Activated CD4-positive, alpha-beta T cell treated with anti-CD3 and anti-CD28 coated beads, Interleukin-2, amount 10 ng/mL, durations not matched to agents 24 days and 14 days (primary cell): ENCODE measurements at regions of chr4 and their contacts with region 1.

Region 1: GRCh38 chr4:154743683-154744340 is at the start of gene LRAT:
- DNase-seq: peak; percentile 87
- H3K4me3 Mint-ChIP-seq: peak within 1 kb of the TSS; percentile 84
- H3K27ac Mint-ChIP-seq: no peak within 1 kb of the TSS
- H3K4me1 Mint-ChIP-seq: peaks cover 14% of the 10 kb centered on the region
- H3K27me3 Mint-ChIP-seq: peaks cover 71% of the 10 kb centered on the region
- total RNA-seq, gene LRAT: not detected in 2 replicates

Region 2: DNA sequence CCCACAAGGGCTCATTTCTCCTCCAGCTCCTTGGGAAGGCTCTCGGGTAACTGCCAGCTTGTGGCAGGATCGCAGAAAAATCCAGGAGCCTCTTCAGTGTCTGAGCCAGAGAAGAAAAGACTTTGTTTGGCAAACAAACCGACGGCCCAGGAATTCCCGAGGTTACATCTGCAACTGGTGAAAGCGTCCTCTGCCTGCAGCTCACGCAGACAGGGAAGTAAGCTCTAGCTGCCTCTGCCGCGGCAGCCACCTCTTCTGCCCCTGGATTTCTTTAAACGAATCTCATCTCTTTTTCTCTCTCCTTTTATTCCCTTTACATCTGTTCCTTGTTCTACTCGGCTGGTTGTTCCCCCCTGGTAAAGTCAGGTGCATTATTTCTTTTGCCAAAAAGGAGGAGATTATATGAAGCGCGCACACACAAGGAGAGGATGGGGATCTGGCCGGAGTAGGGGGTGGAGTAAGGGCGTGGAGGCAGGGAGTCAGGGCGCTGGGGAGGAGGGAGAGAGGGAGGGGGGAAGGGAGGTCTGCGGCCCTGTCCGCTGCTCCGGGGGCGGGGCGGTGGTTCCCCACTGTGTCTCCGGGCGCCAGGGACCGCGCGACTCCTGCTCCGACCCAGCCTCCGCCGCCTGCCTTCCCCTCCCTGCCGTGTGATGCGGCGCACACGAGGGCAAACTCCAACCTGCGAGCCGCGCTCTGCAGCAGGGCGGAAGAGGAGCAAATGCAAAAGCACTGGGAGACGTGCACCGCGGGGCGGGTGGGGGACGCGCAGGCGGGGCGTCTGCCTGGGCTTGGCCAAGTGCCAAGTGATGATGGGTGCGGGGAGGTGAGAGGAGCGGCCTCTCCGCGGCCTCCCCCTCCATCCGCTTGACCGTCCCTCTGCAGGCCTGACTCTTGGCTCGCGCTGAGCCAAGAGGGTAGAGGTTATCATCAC is 252.2 kb before region 1 on chr4 and contains the start of gene DCHS2:
- intact Hi-C with region 1: loop called (anchors 5 kb)
- DNase-seq: peak; percentile 68
- H3K4me3 Mint-ChIP-seq: peak within 1 kb of the TSS; percentile 66
- H3K27ac Mint-ChIP-seq: peak within 1 kb of the TSS; percentile 29
- H3K4me1 Mint-ChIP-seq: peaks cover 13% of the 10 kb centered on the region
- H3K27me3 Mint-ChIP-seq: peaks cover 68% of the 10 kb centered on the region
- total RNA-seq, gene DCHS2: not detected in 2 replicates